ENCODE measurements at regions of chr15 and their contacts with region 1.

Region 1: GRCh38 chr15:74196179-74196590 is 6.4 kb downstream of the STRA6 start:
- H3K4me3 ChIP-seq: no peak overlapping the region
- H3K27ac ChIP-seq: peak overlapping the region; percentile 61; the same call in 1 of the 2 replicates
- H3K4me1 ChIP-seq: peaks cover 31% of the 10 kb centered on the region
- CTCF ChIP-seq: no peak

Region 2: DNA sequence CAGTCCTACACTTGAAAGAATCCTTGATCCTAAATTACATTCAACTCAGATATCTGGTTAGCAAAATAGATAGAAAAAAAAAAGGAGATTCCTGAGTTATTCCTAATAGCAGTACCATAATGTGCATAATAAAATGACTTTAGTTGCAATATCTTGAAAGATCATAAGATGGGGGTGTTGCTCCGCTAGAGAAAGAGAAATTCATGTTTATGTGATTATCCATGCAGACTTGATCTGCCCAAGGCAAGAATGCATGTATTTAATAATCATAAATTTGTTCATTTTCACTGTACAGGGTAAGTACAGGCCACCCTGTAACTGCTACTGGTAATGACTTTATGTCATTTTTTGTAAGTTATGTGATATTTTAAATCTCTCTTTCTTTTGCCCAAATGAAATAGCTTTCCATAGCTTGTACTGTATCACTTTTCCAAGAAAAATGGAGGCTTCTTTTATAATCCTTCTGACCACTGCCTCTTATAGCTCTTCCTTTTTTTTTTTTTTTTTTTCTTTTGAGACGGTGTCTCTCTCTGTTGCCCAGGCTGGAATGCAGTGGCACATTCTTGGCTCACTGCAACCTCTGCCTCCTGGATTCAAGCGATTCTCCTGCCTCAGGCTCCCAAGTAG is 912.0 kb before region 1 on chr15:
- CTCF ChIA-PET with region 1: no interaction called
- POLR2A ChIA-PET with region 1: no interaction called
- H3K4me3 ChIP-seq: no peak overlapping the region
- H3K27ac ChIP-seq: no peak overlapping the region
- H3K4me1 ChIP-seq: no peaks in the 10 kb centered on the region
- CTCF ChIP-seq: no peak

Region 3: GRCh38 chr15:74011610-74012009 is 184.6 kb before region 1 on chr15:
- CTCF ChIA-PET with region 1: no interaction called
- POLR2A ChIA-PET with region 1: no interaction called
- H3K4me3 ChIP-seq: no peak overlapping the region
- H3K27ac ChIP-seq: no peak overlapping the region
- H3K4me1 ChIP-seq: no peaks in the 10 kb centered on the region
- CTCF ChIP-seq: no peak

Region 4: DNA sequence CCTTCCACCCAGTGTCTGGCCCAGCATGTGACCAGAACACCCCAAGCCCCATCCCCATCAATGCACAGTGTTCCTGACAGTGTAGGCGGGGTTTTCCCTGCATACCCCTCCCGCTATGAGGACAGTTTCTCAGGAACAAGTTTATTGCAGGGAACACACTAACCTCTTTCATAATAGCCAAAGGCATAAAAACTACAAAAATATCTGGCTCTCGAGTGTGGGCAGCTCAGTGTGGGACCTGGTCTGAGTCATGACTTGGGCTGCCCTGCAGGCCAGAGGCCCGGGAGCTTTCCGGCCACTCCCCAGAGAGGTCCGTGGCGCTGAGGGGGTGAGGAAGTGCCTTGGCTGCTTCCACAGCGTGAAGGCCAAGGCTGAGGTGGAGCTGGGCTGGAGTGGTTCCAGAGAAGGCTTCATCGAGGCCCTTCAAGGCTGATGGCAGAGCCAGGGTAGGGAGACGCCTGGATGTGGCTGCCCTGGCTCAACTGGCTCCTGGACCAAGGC is 16.8 kb before region 1 on chr15:
- CTCF ChIA-PET with region 1: interaction called, 3 read pairs
- POLR2A ChIA-PET with region 1: interaction called, 21 read pairs
- H3K4me3 ChIP-seq: no peak overlapping the region
- H3K27ac ChIP-seq: no peak overlapping the region; the same call in 1 of the 2 replicates
- H3K4me1 ChIP-seq: peaks cover 13% of the 10 kb centered on the region
- CTCF ChIP-seq: no peak

Region 5: GRCh38 chr15:74185710-74186348 is 10.4 kb before region 1 on chr15:
- CTCF ChIA-PET with region 1: interaction called, 4 read pairs
- POLR2A ChIA-PET with region 1: interaction called, 12 read pairs
- H3K4me3 ChIP-seq: no peak overlapping the region
- H3K27ac ChIP-seq: no peak overlapping the region
- H3K4me1 ChIP-seq: no peaks in the 10 kb centered on the region
- CTCF ChIP-seq: no peak

Region 6: DNA sequence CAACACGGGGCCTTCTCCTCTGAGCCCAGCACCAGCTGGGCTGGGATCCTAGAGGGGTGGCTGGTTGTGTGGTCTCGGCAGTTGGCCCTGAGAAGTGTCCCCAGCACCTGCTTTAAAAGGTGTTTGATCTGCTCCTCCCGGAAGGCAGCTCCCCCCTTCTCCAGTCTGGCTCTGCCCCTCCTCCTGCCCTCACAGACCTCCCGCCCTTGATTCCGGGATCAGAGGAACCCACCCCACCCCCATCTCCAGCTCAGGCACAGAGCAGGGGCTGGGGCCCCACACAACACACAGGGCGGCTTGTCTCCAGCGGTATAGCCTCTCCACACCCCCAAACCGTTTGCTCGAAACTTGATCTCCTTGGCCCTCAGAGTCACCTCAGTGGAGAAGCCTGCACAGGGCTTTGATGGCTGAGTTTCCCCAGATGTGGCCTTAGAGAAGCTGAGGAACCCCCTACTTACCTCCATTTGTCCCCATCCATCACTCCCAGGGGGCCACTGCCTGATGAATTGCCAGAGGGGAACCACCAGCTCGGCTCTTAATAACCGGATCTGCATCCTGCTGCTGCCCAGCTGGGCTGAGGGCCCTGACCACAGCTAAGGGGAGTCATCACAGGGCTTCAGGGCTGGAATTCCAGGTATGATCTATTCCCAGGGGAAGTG is 12.8 kb after region 1 on chr15:
- CTCF ChIA-PET with region 1: interaction called, 9 read pairs
- POLR2A ChIA-PET with region 1: interaction called, 15 read pairs
- H3K4me3 ChIP-seq: no peak overlapping the region
- H3K27ac ChIP-seq: peak overlapping the region; percentile 55; the same call in 1 of the 2 replicates
- H3K4me1 ChIP-seq: peaks cover 20% of the 10 kb centered on the region
- CTCF ChIP-seq: no peak

Region 7: DNA sequence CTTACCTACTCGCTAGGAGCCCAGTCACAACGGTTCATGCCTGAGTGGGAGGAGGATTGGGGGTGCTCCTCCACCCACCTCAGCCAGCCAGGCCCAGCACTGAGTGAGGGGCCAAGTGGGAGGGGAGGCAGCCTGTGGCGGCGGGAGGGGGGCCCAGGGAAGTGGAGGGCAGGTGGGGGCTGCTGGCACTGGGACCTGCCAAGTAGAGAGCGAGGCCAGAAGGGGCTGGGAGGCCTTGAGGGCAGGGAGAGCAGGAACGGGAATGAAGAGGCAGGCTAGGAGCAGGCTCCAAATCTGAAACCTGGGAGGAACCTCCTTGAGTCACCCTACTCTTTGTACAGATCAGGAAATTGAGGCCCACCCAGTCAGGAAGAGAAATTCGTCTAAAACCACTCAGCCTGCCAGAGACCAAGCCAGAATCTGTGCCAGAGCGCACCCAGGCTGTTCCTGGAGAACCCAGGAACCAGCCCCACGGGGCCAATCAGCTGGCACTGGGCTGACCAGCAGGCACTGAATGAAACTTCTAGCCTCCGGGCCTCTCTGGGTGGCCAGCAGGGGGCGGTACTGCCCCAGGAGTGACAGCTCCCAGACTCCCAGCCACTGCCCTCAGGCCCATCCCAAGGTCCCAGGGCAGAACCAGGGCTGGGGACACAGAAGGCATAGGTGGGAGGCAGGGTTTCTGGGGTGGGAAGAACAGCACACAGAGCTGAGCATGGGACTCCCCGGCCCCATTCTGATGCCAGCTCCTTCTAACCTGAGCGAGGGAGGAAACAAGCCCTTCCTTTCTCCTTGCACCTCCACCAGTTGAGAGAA is 186.0 kb after region 1 on chr15:
- CTCF ChIA-PET with region 1: no interaction called
- POLR2A ChIA-PET with region 1: no interaction called
- H3K4me3 ChIP-seq: no peak overlapping the region
- H3K27ac ChIP-seq: no peak overlapping the region
- H3K4me1 ChIP-seq: no peaks in the 10 kb centered on the region
- CTCF ChIP-seq: peak; percentile 95

Measured in HEK293 (cell line).